ENCODE measurements at regions of chr12 and their contacts with region 1.

Region 1: DNA sequence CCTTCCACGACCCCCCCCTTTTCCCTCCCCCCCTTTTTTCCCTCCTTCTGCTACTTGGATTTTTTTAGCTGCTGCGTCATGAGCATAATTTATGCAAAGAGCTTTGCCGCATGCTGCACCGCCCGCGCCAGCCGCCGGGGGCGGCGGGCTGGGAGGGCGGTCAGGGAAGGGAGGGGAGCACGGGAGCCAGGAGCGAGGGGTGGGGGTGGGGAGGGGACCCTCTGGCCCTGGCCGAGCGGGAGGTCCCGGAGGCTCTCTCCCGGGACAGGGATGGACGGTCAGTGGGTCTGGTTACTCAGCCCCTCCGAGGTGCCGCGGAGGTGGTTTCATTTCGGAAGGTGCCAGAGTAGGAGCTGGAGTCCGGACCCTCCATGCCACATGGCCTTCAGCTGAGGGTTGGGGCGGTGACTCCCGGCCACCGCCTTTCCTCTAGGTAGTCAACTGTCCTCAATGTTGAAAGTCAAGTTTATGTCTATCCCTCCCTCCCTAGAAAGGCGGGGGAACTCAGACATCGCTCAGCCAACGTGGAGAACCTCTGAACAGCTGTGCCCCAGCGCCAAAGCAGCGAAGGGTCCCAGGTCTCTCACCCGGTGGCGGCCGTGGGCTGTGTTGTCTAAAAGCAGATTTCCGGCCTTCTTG is at the start of gene POU6F1:
- DNase-seq: peak; percentile 77 to 87
- H3K4me3 ChIP-seq: peak within 1 kb of the TSS; percentile 89
- H3K4me3 Mint-ChIP-seq: peak within 1 kb of the TSS; percentile 76
- H3K27ac Mint-ChIP-seq: peak within 1 kb of the TSS; percentile 94
- H3K4me1 ChIP-seq: peaks cover 6% of the 10 kb centered on the region; the same call in 1 of the 2 replicates
- H3K4me1 Mint-ChIP-seq: peaks cover 20% of the 10 kb centered on the region
- H3K27me3 ChIP-seq: no peaks in the 10 kb centered on the region
- H3K27me3 Mint-ChIP-seq: no peaks in the 10 kb centered on the region
- CTCF ChIP-seq: peak; percentile 75 to 84
- total RNA-seq, gene POU6F1: 4.1 and 5.3 TPM in 2 replicates

Region 2: DNA sequence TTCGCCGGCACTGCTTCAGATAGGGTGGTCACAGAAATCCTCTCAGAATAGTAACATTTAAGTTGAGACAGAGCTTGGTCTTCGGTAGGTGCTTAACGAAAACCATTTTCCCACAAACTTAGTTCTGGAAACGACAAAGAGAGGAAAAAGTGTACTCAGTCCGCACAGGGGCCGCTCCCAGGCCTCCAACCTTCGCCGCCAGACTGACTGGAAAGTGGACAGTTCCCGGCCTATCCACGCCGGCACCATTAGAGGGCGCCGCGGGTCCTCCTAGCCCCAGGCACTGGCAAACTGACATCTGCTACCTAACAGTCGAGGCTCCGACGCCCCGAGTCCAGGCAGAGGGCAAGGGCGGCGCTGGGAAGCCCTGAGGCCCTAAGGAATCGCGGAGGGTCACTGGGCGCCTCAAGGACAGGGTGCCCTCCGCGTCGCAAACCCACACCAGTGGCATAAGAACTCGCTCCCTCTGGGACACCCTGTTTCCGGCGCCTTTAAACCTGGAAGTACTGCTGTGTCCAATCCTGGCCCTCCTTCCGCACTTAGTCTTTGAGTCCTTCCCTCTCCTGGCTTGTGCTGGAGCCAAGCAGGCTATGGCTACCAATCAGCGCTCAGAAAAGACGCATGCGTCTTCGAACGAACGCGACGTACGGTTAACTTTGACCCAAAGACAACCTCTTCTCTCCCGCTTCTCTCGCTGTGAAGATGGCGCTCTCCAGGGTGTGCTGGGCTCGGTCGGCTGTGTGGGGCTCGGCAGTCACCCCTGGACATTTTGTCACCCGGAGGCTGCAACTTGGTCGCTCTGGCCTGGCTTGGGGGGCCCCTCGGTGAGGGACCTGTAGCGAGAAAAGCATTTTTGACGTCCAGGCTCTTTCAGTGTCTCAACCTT is 170.2 kb before region 1 on chr12 and contains the start of gene LETMD1:
- CTCF ChIA-PET with region 1: interaction called, 3 read pairs
- POLR2A ChIA-PET with region 1: interaction called, 6 read pairs
- intact Hi-C with region 1: loop called (anchors 2 kb)
- DNase-seq: peak; percentile 96 to 98
- H3K4me3 ChIP-seq: peak within 1 kb of the TSS; percentile 64
- H3K4me3 Mint-ChIP-seq: peak within 1 kb of the TSS; percentile 99
- H3K27ac Mint-ChIP-seq: peak within 1 kb of the TSS; percentile 96
- H3K4me1 ChIP-seq: no peaks in the 10 kb centered on the region
- H3K4me1 Mint-ChIP-seq: no peaks in the 10 kb centered on the region
- H3K27me3 ChIP-seq: no peaks in the 10 kb centered on the region
- H3K27me3 Mint-ChIP-seq: no peaks in the 10 kb centered on the region
- CTCF ChIP-seq: peak; percentile 93 to 99
- total RNA-seq, gene LETMD1: 90.6 and 95.6 TPM in 2 replicates

Region 3: DNA sequence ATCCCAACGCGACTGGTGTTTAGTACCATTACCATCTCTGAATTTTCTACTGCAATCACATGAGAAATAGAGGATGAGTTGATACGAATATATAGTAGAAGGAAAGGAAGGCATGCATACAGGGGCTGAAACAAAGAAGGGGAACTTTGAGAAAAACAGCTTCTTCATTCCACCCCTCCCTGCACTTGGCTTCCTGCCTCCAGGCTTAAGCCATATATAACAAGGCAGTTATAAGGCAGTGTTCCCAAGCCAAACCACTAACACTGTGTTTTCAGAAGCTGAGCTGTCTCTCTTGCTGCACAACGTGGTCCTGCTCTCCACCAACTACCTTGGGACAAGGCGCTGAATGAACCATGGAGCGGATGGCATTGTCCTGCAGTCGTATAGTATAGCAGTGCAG is 159.0 kb before region 1 on chr12:
- CTCF ChIA-PET with region 1: no interaction called
- POLR2A ChIA-PET with region 1: interaction called, 10 read pairs
- intact Hi-C with region 1: no loop called
- DNase-seq: no peak
- H3K4me3 ChIP-seq: no peak overlapping the region
- H3K4me3 Mint-ChIP-seq: no peak overlapping the region
- H3K27ac Mint-ChIP-seq: no peak overlapping the region
- H3K4me1 ChIP-seq: peaks cover 9% of the 10 kb centered on the region
- H3K4me1 Mint-ChIP-seq: no peaks in the 10 kb centered on the region
- H3K27me3 ChIP-seq: no peaks in the 10 kb centered on the region
- H3K27me3 Mint-ChIP-seq: no peaks in the 10 kb centered on the region
- CTCF ChIP-seq: no peak

Region 4: DNA sequence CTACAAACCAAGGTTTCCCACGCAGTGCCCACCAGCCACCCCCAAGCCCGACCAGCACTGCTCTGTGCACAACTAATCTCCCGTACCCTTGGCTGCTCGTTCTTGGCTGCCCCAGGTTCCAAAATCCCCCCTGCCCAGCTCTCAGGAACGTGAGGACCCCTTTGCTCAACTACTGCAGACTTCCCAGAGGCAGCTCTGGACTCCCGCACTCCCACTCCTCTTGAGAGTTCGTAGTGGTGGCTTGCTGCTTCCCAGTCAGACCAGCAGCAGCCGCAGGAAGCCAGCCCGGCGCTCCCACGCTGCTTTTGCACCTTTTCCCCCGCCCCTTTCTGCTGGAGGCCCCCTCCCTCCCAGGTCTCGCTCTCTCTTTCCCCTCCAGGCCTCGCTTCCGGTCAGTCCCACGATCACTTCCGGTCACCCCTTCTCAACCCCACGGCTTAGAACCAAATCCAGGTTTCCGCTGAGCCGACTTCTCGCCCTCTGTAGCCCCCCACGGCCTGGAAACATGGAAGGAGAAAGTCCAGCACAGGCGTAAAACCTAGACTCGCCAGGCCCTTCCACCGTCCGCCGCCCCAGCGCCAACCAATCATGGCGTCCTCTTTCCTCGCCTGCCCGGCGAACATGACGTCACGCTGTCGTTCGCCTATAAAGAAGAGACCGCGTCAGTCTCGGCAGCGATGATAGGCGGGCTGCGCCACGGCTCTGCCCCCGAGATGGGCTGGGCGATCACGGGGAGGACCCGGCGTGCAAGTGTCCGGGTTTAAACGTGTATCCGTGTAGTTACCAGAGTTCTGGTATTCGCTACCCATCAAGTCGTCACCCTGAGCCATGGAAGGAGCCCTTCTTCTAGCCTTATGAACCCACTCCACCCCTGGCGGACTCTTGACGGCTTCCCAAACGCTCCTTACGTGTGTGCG is 45.3 kb before region 1 on chr12 and contains the start of gene TFCP2:
- CTCF ChIA-PET with region 1: interaction called, 7 read pairs
- POLR2A ChIA-PET with region 1: interaction called, 5 read pairs
- intact Hi-C with region 1: loop called (anchors 1 kb)
- DNase-seq: peak; percentile 98 to 99
- H3K4me3 ChIP-seq: peak within 1 kb of the TSS; percentile 58
- H3K4me3 Mint-ChIP-seq: no peak within 1 kb of the TSS
- H3K27ac Mint-ChIP-seq: no peak within 1 kb of the TSS
- H3K4me1 ChIP-seq: peaks cover 6% of the 10 kb centered on the region; the same call in 1 of the 2 replicates
- H3K4me1 Mint-ChIP-seq: no peaks in the 10 kb centered on the region
- H3K27me3 ChIP-seq: no peaks in the 10 kb centered on the region
- H3K27me3 Mint-ChIP-seq: no peaks in the 10 kb centered on the region
- CTCF ChIP-seq: peak in 1 of 2 experiments; percentile 25
- total RNA-seq, gene TFCP2: 51.4 and 52.6 TPM in 2 replicates

Region 5: GRCh38 chr12:51198568-51199365 is 19.3 kb before region 1 on chr12:
- CTCF ChIA-PET with region 1: interaction called, 7 read pairs
- POLR2A ChIA-PET with region 1: interaction called, 6 read pairs
- intact Hi-C with region 1: loop called (anchors 2 kb)
- DNase-seq: peak; percentile 50 to 52
- H3K4me3 ChIP-seq: no peak overlapping the region
- H3K4me3 Mint-ChIP-seq: no peak overlapping the region
- H3K27ac Mint-ChIP-seq: peak overlapping the region; percentile 43
- H3K4me1 ChIP-seq: peaks cover 11% of the 10 kb centered on the region; the same call in 1 of the 2 replicates
- H3K4me1 Mint-ChIP-seq: peaks cover 21% of the 10 kb centered on the region
- H3K27me3 ChIP-seq: no peaks in the 10 kb centered on the region
- H3K27me3 Mint-ChIP-seq: no peaks in the 10 kb centered on the region
- CTCF ChIP-seq: peak in 1 of 2 experiments; percentile 13

Region 6: GRCh38 chr12:51293696-51294095 is 75.6 kb after region 1 on chr12:
- CTCF ChIA-PET with region 1: no interaction called
- POLR2A ChIA-PET with region 1: no interaction called
- intact Hi-C with region 1: no loop called
- DNase-seq: no peak
- H3K4me3 ChIP-seq: no peak overlapping the region
- H3K4me3 Mint-ChIP-seq: no peak overlapping the region
- H3K27ac Mint-ChIP-seq: no peak overlapping the region
- H3K4me1 ChIP-seq: peaks cover 4% of the 10 kb centered on the region; the same call in 1 of the 2 replicates
- H3K4me1 Mint-ChIP-seq: peaks cover 6% of the 10 kb centered on the region
- H3K27me3 ChIP-seq: no peaks in the 10 kb centered on the region
- H3K27me3 Mint-ChIP-seq: no peaks in the 10 kb centered on the region
- CTCF ChIP-seq: no peak